Activated CD4-positive, alpha-beta T cell treated with anti-CD3 and anti-CD28 coated beads, Interleukin-2, amount 10 ng/mL, durations not matched to agents 24 days and 14 days (primary cell): ENCODE measurements at regions of chr1 and their contacts with region 1.

Region 1: GRCh38 chr1:230891413-230891812 is 23.1 kb upstream of the C1orf198 start:
- DNase-seq: no peak
- H3K4me3 Mint-ChIP-seq: no peak overlapping the region
- H3K27ac Mint-ChIP-seq: no peak overlapping the region
- H3K4me1 Mint-ChIP-seq: no peaks in the 10 kb centered on the region
- H3K27me3 Mint-ChIP-seq: peaks cover 15% of the 10 kb centered on the region

Region 2: DNA sequence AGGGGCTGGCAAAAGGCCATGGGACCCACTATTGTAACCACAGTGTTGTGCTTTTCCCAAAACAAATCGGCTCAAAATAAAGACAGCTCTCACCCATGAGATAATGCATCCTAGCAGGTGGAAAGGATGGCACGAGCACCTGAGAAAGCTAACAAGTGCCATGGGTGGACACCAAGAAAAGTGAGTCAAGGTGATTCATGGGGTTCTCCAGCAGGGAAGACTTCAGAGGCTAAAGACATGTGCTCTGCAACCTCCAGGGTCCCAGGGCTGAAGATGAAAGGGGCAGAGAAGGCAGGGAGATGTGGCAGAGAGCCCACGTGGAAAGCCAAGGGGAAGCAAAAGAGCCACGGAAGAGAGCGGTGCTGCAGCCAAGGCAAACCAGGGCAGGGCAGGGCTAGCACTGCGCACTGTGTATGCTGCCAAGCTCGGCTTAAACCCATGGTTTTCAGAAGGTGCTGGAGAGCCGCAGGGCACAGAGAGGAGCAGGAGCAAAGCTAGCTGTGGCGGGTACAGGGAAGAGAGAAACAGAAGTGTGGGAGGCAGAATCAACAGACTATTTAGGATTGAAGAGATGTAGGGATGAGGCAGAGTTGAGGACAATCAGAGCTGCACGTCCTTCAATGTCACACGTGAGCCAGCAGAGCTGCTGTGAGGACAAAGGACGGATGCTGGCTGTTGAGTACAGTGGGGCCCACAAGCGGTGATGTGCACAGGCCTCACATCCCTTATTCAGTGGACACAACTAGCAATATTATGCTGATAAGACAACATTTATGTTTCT is 18.8 kb after region 1 on chr1:
- intact Hi-C with region 1: loop called (anchors 1 kb)
- DNase-seq: no peak
- H3K4me3 Mint-ChIP-seq: no peak overlapping the region
- H3K27ac Mint-ChIP-seq: no peak overlapping the region
- H3K4me1 Mint-ChIP-seq: peaks cover 6% of the 10 kb centered on the region
- H3K27me3 Mint-ChIP-seq: no peaks in the 10 kb centered on the region